ENCODE measurements at regions of chr5 and their contacts with region 1.

Region 1: GRCh38 chr5:103475629-103476240 is 86.9 kb downstream of the NUDT12 start:
- DNase-seq: no peak
- ATAC-seq: peak; percentile 69 to 85 (median 74)
- H3K4me3 ChIP-seq: no peak overlapping the region
- H3K27ac ChIP-seq: no peak overlapping the region
- H3K4me1 ChIP-seq: no peaks in the 10 kb centered on the region
- H3K27me3 ChIP-seq: no peaks in the 10 kb centered on the region
- CTCF ChIP-seq: peak; percentile 60 to 72 (median 65)
- POLR2A ChIP-seq: no peak

Region 2: DNA sequence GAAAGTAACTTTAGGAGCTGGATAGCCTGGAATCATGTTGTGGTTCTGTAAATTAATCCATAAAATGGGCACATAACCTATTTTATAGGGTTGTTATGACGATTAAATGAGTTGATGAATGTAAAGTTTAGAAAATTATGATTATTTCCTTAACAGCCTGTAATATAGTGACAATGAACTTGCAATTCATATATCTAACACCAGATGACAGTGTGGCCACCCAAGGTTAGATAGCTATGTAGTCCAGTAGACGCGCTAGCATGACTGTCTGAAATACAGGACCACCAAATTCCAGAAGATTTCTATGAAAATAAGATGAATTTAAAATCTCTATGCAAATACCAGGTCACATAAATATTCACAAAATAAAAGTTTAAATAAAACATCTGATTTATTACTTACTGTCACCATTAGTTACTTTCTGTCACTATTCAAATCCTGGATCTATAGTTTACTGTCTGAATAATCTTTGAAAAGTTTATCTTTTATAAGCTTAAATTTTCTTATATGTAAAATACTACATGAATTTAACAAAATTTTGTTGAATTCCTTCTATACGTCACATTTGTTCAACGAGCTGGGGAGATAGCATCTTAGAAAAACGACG is 243.2 kb before region 1 on chr5:
- intact Hi-C with region 1: loop called in 1 of 2 experiments (anchors 10 kb)
- DNase-seq: no peak
- ATAC-seq: peak; percentile 83 to 93 (median 84)
- H3K4me3 ChIP-seq: no peak overlapping the region
- H3K27ac ChIP-seq: no peak overlapping the region
- H3K4me1 ChIP-seq: no peaks in the 10 kb centered on the region
- H3K27me3 ChIP-seq: no peaks in the 10 kb centered on the region
- CTCF ChIP-seq: peak; percentile 82 to 88 (median 86)
- POLR2A ChIP-seq: no peak

Region 3: DNA sequence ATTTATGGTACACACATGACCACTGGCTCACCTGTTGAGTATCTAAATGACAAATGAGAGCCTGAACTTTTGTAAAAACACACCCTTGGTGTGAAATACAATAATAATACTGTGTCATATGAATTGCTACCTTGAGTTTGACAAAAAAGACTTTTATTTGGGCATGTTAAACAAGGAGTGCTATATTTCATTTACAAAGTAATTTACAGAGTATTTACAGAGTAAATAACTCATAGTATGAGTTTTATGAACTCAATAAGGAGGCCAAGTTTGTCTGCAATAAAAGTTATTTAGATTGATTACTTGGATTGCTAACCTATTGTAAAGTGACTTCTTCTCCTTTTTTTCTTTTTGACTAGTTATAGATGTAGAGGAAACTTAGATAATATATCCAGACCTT is 232.9 kb after region 1 on chr5:
- intact Hi-C with region 1: no loop called
- DNase-seq: no peak
- ATAC-seq: no peak
- H3K4me3 ChIP-seq: no peak overlapping the region
- H3K27ac ChIP-seq: no peak overlapping the region
- H3K4me1 ChIP-seq: no peaks in the 10 kb centered on the region
- H3K27me3 ChIP-seq: no peaks in the 10 kb centered on the region
- CTCF ChIP-seq: no peak
- POLR2A ChIP-seq: no peak

Measured in right lobe of liver (tissue), 6 donors.